CD8-positive, alpha-beta memory T cell (primary cell): ENCODE measurements at regions of chr1 and their contacts with region 1.

Region 1: GRCh38 chr1:109277434-109278204 is 5.3 kb downstream of the PSRC1 start:
- DNase-seq: peak; percentile 37 to 67 (median 49)
- H3K4me3 ChIP-seq: no peak overlapping the region
- H3K4me3 Mint-ChIP-seq: no peak overlapping the region
- H3K27ac ChIP-seq: no peak overlapping the region
- H3K27ac Mint-ChIP-seq: peak overlapping the region in 2 of 8 donors; percentile 15 to 87
- H3K4me1 ChIP-seq: peaks cover 8% of the 10 kb centered on the region
- H3K4me1 Mint-ChIP-seq: peaks cover 5 to 12% (median 7%) of the 10 kb centered on the region in 3 donors
- H3K27me3 ChIP-seq: no peaks in the 10 kb centered on the region
- H3K27me3 Mint-ChIP-seq: no peaks in the 10 kb centered on the region

Region 2: DNA sequence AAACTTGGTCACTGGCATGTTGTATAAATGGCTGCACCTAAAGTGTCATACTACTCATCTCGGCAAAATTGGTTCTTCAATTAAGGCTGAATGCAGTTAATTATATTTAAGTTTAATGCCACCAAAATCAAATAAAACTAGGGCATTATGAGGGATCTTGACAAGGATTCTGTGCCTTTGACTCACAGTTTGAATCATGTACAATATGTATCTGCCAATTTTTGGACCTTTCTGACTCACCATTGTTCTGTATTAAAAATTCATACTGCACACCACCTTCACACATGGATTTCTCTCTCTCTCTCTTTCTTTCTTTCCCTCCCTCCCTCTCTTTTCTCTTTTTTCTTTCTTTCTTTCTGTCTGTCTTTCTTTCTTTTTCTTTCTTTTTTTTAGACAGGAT is 545.2 kb before region 1 on chr1:
- CTCF ChIA-PET with region 1: no interaction called
- POLR2A ChIA-PET with region 1: no interaction called
- DNase-seq: no peak
- H3K4me3 ChIP-seq: no peak overlapping the region
- H3K4me3 Mint-ChIP-seq: no peak overlapping the region
- H3K27ac ChIP-seq: no peak overlapping the region
- H3K27ac Mint-ChIP-seq: no peak overlapping the region
- H3K4me1 ChIP-seq: no peaks in the 10 kb centered on the region
- H3K4me1 Mint-ChIP-seq: no peaks in the 10 kb centered on the region
- H3K27me3 ChIP-seq: no peaks in the 10 kb centered on the region
- H3K27me3 Mint-ChIP-seq: peaks cover 0 to 27% of the 10 kb centered on the region in 2 donors

Region 3: DNA sequence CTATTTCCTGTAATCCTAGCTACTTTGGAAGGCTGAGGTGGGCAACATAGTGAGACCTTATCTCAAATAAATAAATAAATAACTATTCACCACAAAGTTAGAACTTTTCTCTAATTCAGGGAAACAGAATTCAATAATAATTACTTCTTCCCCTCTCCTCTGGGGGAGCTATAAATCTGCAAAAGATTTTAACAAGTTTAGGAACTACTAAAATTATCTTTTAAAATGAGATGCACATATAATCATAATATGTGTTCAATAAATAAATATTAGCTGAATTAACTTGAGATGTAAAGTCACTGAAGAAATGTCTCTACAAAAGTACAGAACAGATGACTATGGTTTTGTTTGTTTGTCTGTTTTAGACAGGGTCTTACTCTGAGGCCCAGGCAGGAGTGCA is 249.8 kb before region 1 on chr1:
- CTCF ChIA-PET with region 1: no interaction called
- POLR2A ChIA-PET with region 1: no interaction called
- DNase-seq: no peak
- H3K4me3 ChIP-seq: no peak overlapping the region
- H3K4me3 Mint-ChIP-seq: no peak overlapping the region
- H3K27ac ChIP-seq: no peak overlapping the region
- H3K27ac Mint-ChIP-seq: no peak overlapping the region
- H3K4me1 ChIP-seq: no peaks in the 10 kb centered on the region
- H3K4me1 Mint-ChIP-seq: no peaks in the 10 kb centered on the region
- H3K27me3 ChIP-seq: no peaks in the 10 kb centered on the region
- H3K27me3 Mint-ChIP-seq: no peaks in the 10 kb centered on the region

Region 4: GRCh38 chr1:109158433-109158832 is 119.2 kb before region 1 on chr1:
- CTCF ChIA-PET with region 1: no interaction called
- POLR2A ChIA-PET with region 1: no interaction called
- DNase-seq: no peak
- H3K4me3 ChIP-seq: no peak overlapping the region
- H3K4me3 Mint-ChIP-seq: no peak overlapping the region
- H3K27ac ChIP-seq: no peak overlapping the region
- H3K27ac Mint-ChIP-seq: no peak overlapping the region
- H3K4me1 ChIP-seq: peaks cover 7% of the 10 kb centered on the region
- H3K4me1 Mint-ChIP-seq: peaks cover 13 to 16% (median 16%) of the 10 kb centered on the region in 3 donors
- H3K27me3 ChIP-seq: no peaks in the 10 kb centered on the region
- H3K27me3 Mint-ChIP-seq: no peaks in the 10 kb centered on the region

Region 5: GRCh38 chr1:109295712-109296415 is 18.2 kb after region 1 on chr1:
- CTCF ChIA-PET with region 1: interaction called, 12 read pairs
- POLR2A ChIA-PET with region 1: no interaction called
- DNase-seq: no peak
- H3K4me3 ChIP-seq: no peak overlapping the region
- H3K4me3 Mint-ChIP-seq: no peak overlapping the region
- H3K27ac ChIP-seq: no peak overlapping the region
- H3K27ac Mint-ChIP-seq: no peak overlapping the region
- H3K4me1 ChIP-seq: no peaks in the 10 kb centered on the region
- H3K4me1 Mint-ChIP-seq: no peaks in the 10 kb centered on the region
- H3K27me3 ChIP-seq: no peaks in the 10 kb centered on the region
- H3K27me3 Mint-ChIP-seq: peaks cover 23 to 46% of the 10 kb centered on the region in 2 donors

Region 6: DNA sequence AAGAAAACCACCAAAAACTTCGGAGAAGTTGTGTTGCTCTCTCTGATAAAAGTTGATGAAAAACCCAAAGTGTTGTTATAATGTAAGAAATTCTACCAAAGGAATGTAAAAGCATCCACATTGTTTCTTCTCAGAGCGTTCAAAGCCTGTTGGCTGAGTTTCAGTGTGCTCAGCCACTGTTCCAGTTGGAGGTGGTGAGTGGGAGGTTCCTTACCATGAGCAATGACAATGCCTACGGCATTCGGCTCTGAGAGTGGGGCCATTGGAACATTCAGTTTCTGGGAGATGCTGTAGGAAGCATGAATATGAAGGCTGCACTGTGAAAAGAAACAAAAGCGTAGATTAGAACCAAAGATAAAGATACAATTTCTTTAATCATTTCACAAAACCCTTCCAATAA is 49.7 kb after region 1 on chr1:
- CTCF ChIA-PET with region 1: no interaction called
- POLR2A ChIA-PET with region 1: no interaction called
- DNase-seq: no peak
- H3K4me3 ChIP-seq: no peak overlapping the region
- H3K4me3 Mint-ChIP-seq: no peak overlapping the region
- H3K27ac ChIP-seq: no peak overlapping the region
- H3K27ac Mint-ChIP-seq: no peak overlapping the region
- H3K4me1 ChIP-seq: no peaks in the 10 kb centered on the region
- H3K4me1 Mint-ChIP-seq: no peaks in the 10 kb centered on the region
- H3K27me3 ChIP-seq: no peaks in the 10 kb centered on the region
- H3K27me3 Mint-ChIP-seq: peaks cover 4 to 5% of the 10 kb centered on the region in 2 donors

Region 7: GRCh38 chr1:109397538-109398342 is 120.1 kb after region 1 on chr1 and contains the start of gene SORT1:
- CTCF ChIA-PET with region 1: interaction called, 53 read pairs
- POLR2A ChIA-PET with region 1: interaction called, 4 read pairs
- DNase-seq: peak; percentile 38 to 78 (median 50)
- H3K4me3 ChIP-seq: peak within 1 kb of the TSS; percentile 30
- H3K4me3 Mint-ChIP-seq: peak within 1 kb of the TSS; percentile 77 to 92 (median 80)
- H3K27ac ChIP-seq: peak within 1 kb of the TSS; percentile 60
- H3K27ac Mint-ChIP-seq: peak within 1 kb of the TSS in 3 of 8 donors; percentile 41 to 67 (median 46)
- H3K4me1 ChIP-seq: peaks cover 10% of the 10 kb centered on the region
- H3K4me1 Mint-ChIP-seq: peaks cover 7 to 18% (median 15%) of the 10 kb centered on the region in 3 donors
- H3K27me3 ChIP-seq: peaks cover 24% of the 10 kb centered on the region
- H3K27me3 Mint-ChIP-seq: peaks cover 33 to 41% of the 10 kb centered on the region in 2 donors
- total RNA-seq, gene SORT1: 3.0 to 3.9 TPM